Activated B cell treated with CpG ODN at 0.5 μM for 24 hours (primary cell): ENCODE measurements at regions of chr20 and their contacts with region 1.

Region 1: GRCh38 chr20:40990542-40991120 is 38.0 kb upstream of the TOP1 start:
- DNase-seq: peak; percentile 38
- ATAC-seq: peak; percentile 35
- H3K4me3 Mint-ChIP-seq: peak overlapping the region; percentile 72
- H3K27ac Mint-ChIP-seq: peak overlapping the region; percentile 96
- H3K4me1 Mint-ChIP-seq: peaks cover 52% of the 10 kb centered on the region
- H3K27me3 Mint-ChIP-seq: no peaks in the 10 kb centered on the region
- CTCF ChIP-seq: no peak

Region 2: GRCh38 chr20:39829256-39829655 is 1161.4 kb before region 1 on chr20:
- CTCF ChIA-PET with region 1: no interaction called
- POLR2A ChIA-PET with region 1: no interaction called
- intact Hi-C with region 1: loop called (anchors 5 kb)
- DNase-seq: no peak
- ATAC-seq: peak; percentile 46
- H3K4me3 Mint-ChIP-seq: peak overlapping the region; percentile 59
- H3K27ac Mint-ChIP-seq: peak overlapping the region; percentile 84
- H3K4me1 Mint-ChIP-seq: peaks cover 57% of the 10 kb centered on the region
- H3K27me3 Mint-ChIP-seq: no peaks in the 10 kb centered on the region
- CTCF ChIP-seq: no peak

Region 3: GRCh38 chr20:41003143-41003883 is 12.7 kb after region 1 on chr20:
- CTCF ChIA-PET with region 1: interaction called, 13 read pairs
- POLR2A ChIA-PET with region 1: interaction called, 148 read pairs
- intact Hi-C with region 1: loop called (anchors 1 kb)
- DNase-seq: peak; percentile 30
- ATAC-seq: peak; percentile 90
- H3K4me3 Mint-ChIP-seq: peak overlapping the region; percentile 63
- H3K27ac Mint-ChIP-seq: peak overlapping the region; percentile 93
- H3K4me1 Mint-ChIP-seq: peaks cover 20% of the 10 kb centered on the region
- H3K27me3 Mint-ChIP-seq: no peaks in the 10 kb centered on the region
- CTCF ChIP-seq: no peak

Region 4: GRCh38 chr20:41038878-41039404 is 48.3 kb after region 1 on chr20:
- CTCF ChIA-PET with region 1: interaction called, 19 read pairs
- POLR2A ChIA-PET with region 1: interaction called, 7 read pairs
- intact Hi-C with region 1: no loop called
- DNase-seq: no peak
- ATAC-seq: no peak
- H3K4me3 Mint-ChIP-seq: no peak overlapping the region
- H3K27ac Mint-ChIP-seq: no peak overlapping the region
- H3K4me1 Mint-ChIP-seq: peaks cover 62% of the 10 kb centered on the region
- H3K27me3 Mint-ChIP-seq: no peaks in the 10 kb centered on the region
- CTCF ChIP-seq: no peak

Region 5: GRCh38 chr20:41072190-41072863 is 81.7 kb after region 1 on chr20:
- CTCF ChIA-PET with region 1: interaction called, 26 read pairs
- POLR2A ChIA-PET with region 1: interaction called, 16 read pairs
- intact Hi-C with region 1: no loop called
- DNase-seq: no peak
- ATAC-seq: no peak
- H3K4me3 Mint-ChIP-seq: no peak overlapping the region
- H3K27ac Mint-ChIP-seq: no peak overlapping the region
- H3K4me1 Mint-ChIP-seq: peaks cover 49% of the 10 kb centered on the region
- H3K27me3 Mint-ChIP-seq: no peaks in the 10 kb centered on the region
- CTCF ChIP-seq: no peak

Region 6: GRCh38 chr20:41136680-41137613 is 146.3 kb after region 1 on chr20 and contains the start of gene PLCG1:
- CTCF ChIA-PET with region 1: interaction called, 4 read pairs
- POLR2A ChIA-PET with region 1: interaction called, 3 read pairs
- intact Hi-C with region 1: loop called (anchors 1 kb)
- DNase-seq: peak; percentile 84
- ATAC-seq: peak; percentile 73
- H3K4me3 Mint-ChIP-seq: peak within 1 kb of the TSS; percentile 84
- H3K27ac Mint-ChIP-seq: peak within 1 kb of the TSS; percentile 78
- H3K4me1 Mint-ChIP-seq: peaks cover 69% of the 10 kb centered on the region
- H3K27me3 Mint-ChIP-seq: no peaks in the 10 kb centered on the region
- CTCF ChIP-seq: no peak
- total RNA-seq, gene PLCG1: 61.1 and 61.8 TPM in 2 replicates